Mammary epithelial cell (primary cell): ENCODE measurements at regions of chr18 and their contacts with region 1.

Region 1: DNA sequence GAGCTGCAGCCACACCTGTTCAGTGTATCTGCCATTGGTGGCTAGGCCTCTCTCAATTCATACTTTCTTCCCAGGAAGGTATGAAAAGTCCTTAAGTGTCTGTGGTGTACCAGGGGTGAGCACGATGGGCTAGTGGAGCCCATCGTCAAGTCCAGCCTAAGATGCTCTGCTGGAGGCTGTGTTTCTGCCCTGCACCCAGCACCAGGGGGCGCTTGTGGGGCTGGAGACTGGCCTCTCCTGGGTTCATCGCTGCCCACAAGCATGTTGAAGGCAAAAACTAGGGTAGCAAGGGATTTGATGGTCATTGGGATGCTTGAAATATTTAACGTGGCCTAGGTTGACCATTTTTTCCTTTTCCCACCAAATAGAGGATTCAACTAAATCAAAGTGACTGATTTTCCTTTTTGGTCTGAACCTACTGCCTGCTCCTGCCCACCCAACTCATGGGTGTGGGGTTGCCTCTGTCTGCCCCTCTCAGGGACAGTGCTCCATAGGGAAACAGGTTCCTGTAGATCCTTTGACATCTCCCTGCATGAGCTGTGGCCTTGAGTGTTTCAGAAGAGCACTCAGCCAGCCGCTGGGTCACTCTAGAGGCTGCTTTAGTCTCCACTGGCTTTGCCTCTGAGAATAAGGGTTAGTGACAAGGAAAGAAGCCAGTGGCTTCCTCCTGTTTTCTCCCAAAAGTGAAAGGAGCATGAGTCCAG is 59.0 kb downstream of the TPGS2 start:
- DNase-seq: no peak
- H3K4me3 ChIP-seq: no peak overlapping the region
- H3K27ac ChIP-seq: no peak overlapping the region
- H3K4me1 ChIP-seq: peaks cover 3% of the 10 kb centered on the region
- H3K27me3 ChIP-seq: no peaks in the 10 kb centered on the region
- CTCF ChIP-seq: peak; percentile 36 to 37

Region 2: DNA sequence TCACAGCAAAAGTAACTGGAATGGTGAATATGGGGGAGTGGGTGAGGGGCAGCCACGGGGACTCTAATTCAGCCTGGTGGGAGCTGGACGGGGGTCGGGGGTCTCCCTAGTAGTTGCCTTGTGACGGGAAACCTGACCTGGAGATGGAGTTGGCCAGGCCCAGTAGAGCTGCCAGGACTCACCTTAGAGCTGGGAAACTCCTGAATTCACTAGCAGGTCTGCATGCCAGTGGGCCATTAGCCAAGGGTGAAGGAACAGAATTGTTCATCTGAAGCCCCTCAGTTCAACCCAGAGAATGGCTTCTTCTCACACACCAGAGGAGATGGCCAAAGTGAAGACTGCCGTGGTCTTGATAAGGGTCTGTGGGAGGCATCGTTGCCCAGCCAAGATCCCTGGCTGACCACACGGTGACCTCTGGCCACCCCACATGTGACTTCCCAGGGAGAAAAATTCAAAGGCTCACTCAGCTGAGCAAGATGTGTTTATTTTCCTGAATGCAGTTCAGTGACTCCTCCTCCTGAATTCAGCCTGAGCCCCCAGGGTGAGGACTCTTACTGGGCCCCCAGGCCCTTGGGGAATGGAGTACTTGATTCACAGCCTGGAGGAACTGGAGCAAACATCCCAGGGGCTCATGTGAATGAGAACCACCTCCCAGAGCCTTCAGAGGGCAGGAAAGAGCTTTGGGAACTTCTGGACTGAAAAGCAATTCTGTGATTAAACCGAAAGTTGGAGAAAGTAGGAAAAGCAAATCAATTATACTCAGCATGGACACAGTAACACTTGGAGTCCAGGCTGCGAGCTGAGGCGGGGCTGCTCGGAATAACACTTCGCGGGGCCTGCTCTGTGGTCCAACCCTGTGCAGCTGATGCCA is 557.2 kb before region 1 on chr18:
- CTCF ChIA-PET with region 1: no interaction called
- dilution Hi-C with region 1: no loop called
- in situ Hi-C with region 1: no loop called
- intact Hi-C with region 1: no loop called
- DNase-seq: no peak
- H3K4me3 ChIP-seq: no peak overlapping the region
- H3K27ac ChIP-seq: no peak overlapping the region
- H3K4me1 ChIP-seq: peaks cover 15% of the 10 kb centered on the region
- H3K27me3 ChIP-seq: no peaks in the 10 kb centered on the region
- CTCF ChIP-seq: no peak

Region 3: DNA sequence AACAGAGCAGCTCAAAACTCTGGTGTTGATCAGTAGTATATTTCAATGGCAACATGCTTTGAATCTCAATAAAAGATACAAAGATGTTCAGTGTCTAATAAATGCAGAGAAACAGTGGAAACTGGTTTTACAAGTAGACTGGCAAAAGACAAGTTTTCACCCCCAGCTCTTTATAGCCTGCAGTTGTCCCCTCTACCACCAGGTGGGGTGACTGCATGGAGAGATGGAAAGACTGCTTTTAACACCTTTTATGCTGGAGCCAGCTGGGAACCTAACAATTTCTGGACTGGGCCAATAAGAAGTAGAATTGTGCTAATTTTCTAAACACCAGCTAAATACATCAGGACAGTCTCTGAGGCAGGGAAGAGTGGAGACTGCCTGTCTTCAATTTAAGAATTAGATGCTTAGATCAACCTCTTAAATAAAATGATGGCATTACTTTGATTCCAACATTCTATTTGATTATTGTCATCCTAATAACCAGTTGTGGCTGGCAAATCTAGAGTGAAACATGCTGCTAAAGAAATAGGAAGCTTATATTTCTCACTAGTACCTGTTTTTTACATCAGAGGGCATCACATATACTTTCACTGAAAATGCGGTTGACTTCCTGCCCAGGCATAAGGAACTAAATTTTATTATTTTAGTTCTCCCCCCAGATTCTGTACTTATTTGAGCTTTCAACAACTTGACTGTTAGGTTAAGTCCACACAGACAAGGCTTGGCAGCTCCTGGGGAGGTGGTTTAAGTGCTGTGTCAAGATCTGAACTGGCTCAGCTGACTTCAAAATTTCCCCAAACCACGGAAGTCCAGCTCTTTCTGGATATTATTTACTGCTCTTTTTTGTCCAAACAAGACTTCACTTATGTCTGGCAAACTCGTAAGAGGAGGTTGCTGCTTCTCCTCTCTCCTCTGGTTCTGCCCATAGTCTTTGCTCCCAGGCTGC is 81.5 kb before region 1 on chr18:
- CTCF ChIA-PET with region 1: no interaction called
- dilution Hi-C with region 1: loop called (anchors 10 kb)
- in situ Hi-C with region 1: no loop called
- intact Hi-C with region 1: no loop called
- DNase-seq: peak; percentile 60
- H3K4me3 ChIP-seq: no peak overlapping the region
- H3K27ac ChIP-seq: no peak overlapping the region
- H3K4me1 ChIP-seq: no peaks in the 10 kb centered on the region
- H3K27me3 ChIP-seq: no peaks in the 10 kb centered on the region
- CTCF ChIP-seq: peak; percentile 82 to 97

Region 4: GRCh38 chr18:36702401-36703013 is 67.3 kb before region 1 on chr18:
- CTCF ChIA-PET with region 1: no interaction called
- dilution Hi-C with region 1: no loop called
- in situ Hi-C with region 1: no loop called
- intact Hi-C with region 1: no loop called
- DNase-seq: no peak
- H3K4me3 ChIP-seq: no peak overlapping the region
- H3K27ac ChIP-seq: no peak overlapping the region
- H3K4me1 ChIP-seq: peaks cover 11% of the 10 kb centered on the region
- H3K27me3 ChIP-seq: no peaks in the 10 kb centered on the region
- CTCF ChIP-seq: no peak